ENCODE measurements at regions of chr11 and their contacts with region 1.

Region 1: DNA sequence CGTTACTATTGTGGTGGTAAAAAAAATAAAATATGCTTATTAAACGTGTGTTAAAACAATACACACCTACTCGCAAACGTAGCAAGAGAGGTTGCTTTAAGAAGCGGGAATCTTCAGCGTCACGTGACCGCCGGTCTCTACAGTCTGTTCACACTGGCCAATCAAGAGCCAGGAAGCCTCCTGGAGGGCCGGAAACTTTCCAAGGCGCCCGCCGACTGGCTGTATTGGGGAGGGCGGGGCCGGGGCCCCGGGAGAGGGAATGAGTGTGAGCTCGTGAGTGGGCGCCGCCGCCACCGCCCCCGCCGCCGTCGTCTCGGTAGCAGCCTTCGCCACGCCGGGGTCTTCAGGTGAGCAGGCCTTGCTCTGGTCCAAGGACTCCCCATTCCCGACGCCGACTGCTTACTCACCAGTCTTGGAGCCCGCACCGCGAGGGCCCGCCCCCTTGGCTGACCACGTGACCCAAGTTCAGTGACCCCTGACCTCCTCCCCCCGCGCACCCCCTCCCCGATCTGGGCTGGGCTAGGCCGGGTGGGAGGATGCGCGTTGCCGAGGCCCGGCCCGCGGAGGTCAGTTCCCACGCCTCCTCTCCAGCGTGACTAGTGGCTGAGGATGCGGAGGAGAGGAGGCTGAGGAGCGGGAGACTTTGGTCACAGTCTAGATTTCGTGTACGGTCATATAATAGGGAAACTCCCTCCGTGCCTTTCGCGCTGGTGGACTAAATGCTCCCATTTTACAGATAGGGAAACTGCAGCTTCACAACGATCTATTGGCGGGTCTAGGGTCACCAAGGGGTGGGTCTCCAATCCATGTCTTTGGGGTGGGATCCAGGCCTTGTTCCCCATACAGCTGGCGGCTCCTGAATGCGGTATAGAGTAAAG is at the start of gene TAF6L:
- DNase-seq: peak; percentile 97 to 99
- H3K4me3 ChIP-seq: peak within 1 kb of the TSS; percentile 81
- H3K4me3 Mint-ChIP-seq: peak within 1 kb of the TSS; percentile 92
- H3K27ac Mint-ChIP-seq: peak within 1 kb of the TSS; percentile 99
- H3K4me1 ChIP-seq: peaks cover 6% of the 10 kb centered on the region
- H3K4me1 Mint-ChIP-seq: no peaks in the 10 kb centered on the region
- H3K27me3 ChIP-seq: no peaks in the 10 kb centered on the region
- H3K27me3 Mint-ChIP-seq: no peaks in the 10 kb centered on the region
- CTCF ChIP-seq: no peak
- total RNA-seq, gene TAF6L: 26.8 and 30.1 TPM in 2 replicates

Region 2: DNA sequence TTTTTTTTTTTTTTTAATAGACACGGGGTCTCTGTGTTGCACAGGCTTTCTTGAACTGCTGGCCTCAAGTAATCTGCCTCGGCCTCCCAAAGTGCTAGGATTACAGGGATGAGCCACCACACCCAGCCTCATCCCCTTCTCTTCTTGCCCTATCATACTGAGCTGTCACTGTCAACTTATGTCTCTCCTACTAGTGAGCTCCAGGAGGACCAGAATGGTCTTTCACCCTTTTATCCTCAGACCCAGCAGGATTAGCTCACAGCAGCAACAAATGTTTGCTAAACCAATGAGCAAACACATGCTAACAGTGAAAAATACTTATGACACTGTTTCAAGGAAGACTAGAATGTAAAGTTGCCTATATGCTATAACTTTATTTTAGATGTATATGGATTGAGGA is 40.3 kb after region 1 on chr11:
- CTCF ChIA-PET with region 1: no interaction called
- POLR2A ChIA-PET with region 1: interaction called, 11 read pairs
- intact Hi-C with region 1: no loop called
- DNase-seq: no peak
- H3K4me3 ChIP-seq: no peak overlapping the region
- H3K4me3 Mint-ChIP-seq: no peak overlapping the region
- H3K27ac Mint-ChIP-seq: no peak overlapping the region
- H3K4me1 ChIP-seq: no peaks in the 10 kb centered on the region; the same call in 1 of the 2 replicates
- H3K4me1 Mint-ChIP-seq: no peaks in the 10 kb centered on the region
- H3K27me3 ChIP-seq: no peaks in the 10 kb centered on the region
- H3K27me3 Mint-ChIP-seq: no peaks in the 10 kb centered on the region
- CTCF ChIP-seq: no peak